Dendritic cell treated with granulocyte-macrophage colony-stimulating factor and Interleukin-4, amounts not matched to agents 40 ng/mL and 50 ng/mL, for 4 days (primary cell): ENCODE measurements at regions of chr12 and their contacts with region 1.

Region 1: DNA sequence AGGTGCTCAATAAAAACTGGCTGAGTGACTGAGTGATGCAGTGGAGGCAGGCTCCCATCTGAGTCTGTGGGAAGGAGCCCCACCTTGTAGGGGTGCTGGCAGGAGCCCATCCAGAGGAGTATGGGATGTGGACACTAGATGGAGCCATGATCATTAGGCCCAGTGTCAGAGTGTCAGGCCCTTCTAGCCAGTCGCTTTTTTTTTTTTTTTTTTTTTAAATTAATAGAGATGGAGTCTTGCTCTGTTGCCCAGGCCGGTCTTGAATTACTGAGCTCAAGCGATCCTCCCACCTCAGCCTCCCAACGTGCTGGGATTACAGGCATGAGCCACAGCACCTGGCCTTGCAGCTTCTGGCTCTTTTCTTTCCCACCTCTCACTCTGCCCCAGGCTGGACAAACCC is 11.5 kb downstream of the RITA1 start:
- H3K4me3 Mint-ChIP-seq: no peak overlapping the region
- H3K27ac Mint-ChIP-seq: peak overlapping the region; percentile 32
- H3K4me1 Mint-ChIP-seq: peaks cover 44% of the 10 kb centered on the region
- H3K27me3 Mint-ChIP-seq: no peaks in the 10 kb centered on the region

Region 2: GRCh38 chr12:113214938-113215400 is 18.0 kb after region 1 on chr12:
- intact Hi-C with region 1: loop called (anchors 2 kb)
- H3K4me3 Mint-ChIP-seq: peak overlapping the region; percentile 45
- H3K27ac Mint-ChIP-seq: peak overlapping the region; percentile 88
- H3K4me1 Mint-ChIP-seq: peaks cover 62% of the 10 kb centered on the region
- H3K27me3 Mint-ChIP-seq: no peaks in the 10 kb centered on the region

Region 3: DNA sequence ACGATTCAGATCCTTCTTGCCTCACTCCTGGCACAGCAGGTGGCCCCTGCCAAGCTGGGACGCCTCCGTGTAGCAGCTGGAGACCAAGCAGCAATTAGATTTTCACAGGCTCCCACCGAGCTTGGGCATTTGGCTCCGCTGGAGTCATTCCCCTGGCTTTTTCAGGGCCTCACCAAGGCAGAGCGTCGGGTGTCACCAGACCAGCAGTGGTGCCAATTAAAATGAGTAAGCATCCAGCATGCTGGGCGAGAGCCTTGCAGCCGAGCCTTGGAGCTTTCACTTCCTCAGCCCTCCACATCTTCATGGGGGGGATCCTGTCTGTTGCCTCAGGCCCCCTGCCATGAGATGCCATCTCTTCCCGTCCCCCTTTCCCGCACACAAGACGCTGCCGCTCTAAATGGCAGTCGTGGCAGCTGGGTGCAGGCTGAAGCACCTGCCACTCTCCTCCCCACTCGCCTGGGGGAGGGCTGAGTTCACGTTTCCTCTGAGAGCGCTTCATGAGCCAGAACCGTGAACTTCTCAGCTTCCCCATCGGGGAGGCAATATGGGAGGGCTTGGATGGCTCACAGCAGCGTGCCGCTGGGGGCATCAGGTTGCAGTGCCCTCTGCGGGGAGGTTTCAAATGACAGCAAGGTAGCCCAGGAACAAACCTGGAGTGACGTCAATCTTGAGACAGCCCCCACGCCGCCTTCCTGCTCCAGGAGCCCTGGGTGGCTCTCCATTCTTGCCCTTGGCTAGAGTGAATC is 36.0 kb after region 1 on chr12:
- intact Hi-C with region 1: loop called (anchors 5 kb)
- H3K4me3 Mint-ChIP-seq: peak overlapping the region; percentile 39
- H3K27ac Mint-ChIP-seq: peak overlapping the region; percentile 91
- H3K4me1 Mint-ChIP-seq: peaks cover 100% of the 10 kb centered on the region
- H3K27me3 Mint-ChIP-seq: no peaks in the 10 kb centered on the region

Region 4: GRCh38 chr12:113271853-113272561 is 75.0 kb after region 1 on chr12:
- intact Hi-C with region 1: loop called (anchors 5 kb)
- H3K4me3 Mint-ChIP-seq: peak overlapping the region; percentile 58
- H3K27ac Mint-ChIP-seq: peak overlapping the region; percentile 91
- H3K4me1 Mint-ChIP-seq: peaks cover 62% of the 10 kb centered on the region
- H3K27me3 Mint-ChIP-seq: no peaks in the 10 kb centered on the region